Activated CD4-positive, alpha-beta T cell treated with anti-CD3 and anti-CD28 coated beads, Interleukin-2, amount 10 ng/mL, durations not matched to agents 24 days and 14 days (primary cell): ENCODE measurements at regions of chr17 and their contacts with region 1.

Region 1: GRCh38 chr17:48483471-48484131 is 47.2 kb downstream of the HOXB1 start:
- DNase-seq: peak; percentile 83
- H3K4me3 Mint-ChIP-seq: peak overlapping the region; percentile 51
- H3K27ac Mint-ChIP-seq: peak overlapping the region; percentile 63
- H3K4me1 Mint-ChIP-seq: peaks cover 34% of the 10 kb centered on the region
- H3K27me3 Mint-ChIP-seq: no peaks in the 10 kb centered on the region

Region 2: GRCh38 chr17:48024937-48025906 is 458.4 kb before region 1 on chr17:
- intact Hi-C with region 1: no loop called
- DNase-seq: peak; percentile 99
- H3K4me3 Mint-ChIP-seq: peak overlapping the region; percentile 88
- H3K27ac Mint-ChIP-seq: peak overlapping the region; percentile 83
- H3K4me1 Mint-ChIP-seq: peaks cover 28% of the 10 kb centered on the region
- H3K27me3 Mint-ChIP-seq: peaks cover 22% of the 10 kb centered on the region

Region 3: GRCh38 chr17:48351831-48352332 is 131.7 kb before region 1 on chr17:
- intact Hi-C with region 1: loop called (anchors 5 kb)
- DNase-seq: no peak
- H3K4me3 Mint-ChIP-seq: no peak overlapping the region
- H3K27ac Mint-ChIP-seq: no peak overlapping the region
- H3K4me1 Mint-ChIP-seq: peaks cover 6% of the 10 kb centered on the region
- H3K27me3 Mint-ChIP-seq: no peaks in the 10 kb centered on the region

Region 4: GRCh38 chr17:48429638-48430586 is 53.7 kb before region 1 on chr17 and contains the start of gene SKAP1:
- intact Hi-C with region 1: loop called (anchors 5 kb)
- DNase-seq: peak; percentile 93
- H3K4me3 Mint-ChIP-seq: peak within 1 kb of the TSS; percentile 99
- H3K27ac Mint-ChIP-seq: peak within 1 kb of the TSS; percentile 99
- H3K4me1 Mint-ChIP-seq: peaks cover 64% of the 10 kb centered on the region
- H3K27me3 Mint-ChIP-seq: no peaks in the 10 kb centered on the region
- total RNA-seq, gene SKAP1: 59.3 and 63.1 TPM in 2 replicates

Region 5: GRCh38 chr17:48441231-48441711 is 42.3 kb before region 1 on chr17:
- intact Hi-C with region 1: loop called (anchors 5 kb)
- DNase-seq: peak; percentile 86
- H3K4me3 Mint-ChIP-seq: peak overlapping the region; percentile 51
- H3K27ac Mint-ChIP-seq: peak overlapping the region; percentile 95
- H3K4me1 Mint-ChIP-seq: peaks cover 83% of the 10 kb centered on the region
- H3K27me3 Mint-ChIP-seq: no peaks in the 10 kb centered on the region

Region 6: GRCh38 chr17:48457080-48457836 is 26.3 kb before region 1 on chr17:
- intact Hi-C with region 1: loop called (anchors 2 kb)
- DNase-seq: peak; percentile 93
- H3K4me3 Mint-ChIP-seq: peak overlapping the region; percentile 53
- H3K27ac Mint-ChIP-seq: peak overlapping the region; percentile 17
- H3K4me1 Mint-ChIP-seq: peaks cover 53% of the 10 kb centered on the region
- H3K27me3 Mint-ChIP-seq: no peaks in the 10 kb centered on the region

Region 7: DNA sequence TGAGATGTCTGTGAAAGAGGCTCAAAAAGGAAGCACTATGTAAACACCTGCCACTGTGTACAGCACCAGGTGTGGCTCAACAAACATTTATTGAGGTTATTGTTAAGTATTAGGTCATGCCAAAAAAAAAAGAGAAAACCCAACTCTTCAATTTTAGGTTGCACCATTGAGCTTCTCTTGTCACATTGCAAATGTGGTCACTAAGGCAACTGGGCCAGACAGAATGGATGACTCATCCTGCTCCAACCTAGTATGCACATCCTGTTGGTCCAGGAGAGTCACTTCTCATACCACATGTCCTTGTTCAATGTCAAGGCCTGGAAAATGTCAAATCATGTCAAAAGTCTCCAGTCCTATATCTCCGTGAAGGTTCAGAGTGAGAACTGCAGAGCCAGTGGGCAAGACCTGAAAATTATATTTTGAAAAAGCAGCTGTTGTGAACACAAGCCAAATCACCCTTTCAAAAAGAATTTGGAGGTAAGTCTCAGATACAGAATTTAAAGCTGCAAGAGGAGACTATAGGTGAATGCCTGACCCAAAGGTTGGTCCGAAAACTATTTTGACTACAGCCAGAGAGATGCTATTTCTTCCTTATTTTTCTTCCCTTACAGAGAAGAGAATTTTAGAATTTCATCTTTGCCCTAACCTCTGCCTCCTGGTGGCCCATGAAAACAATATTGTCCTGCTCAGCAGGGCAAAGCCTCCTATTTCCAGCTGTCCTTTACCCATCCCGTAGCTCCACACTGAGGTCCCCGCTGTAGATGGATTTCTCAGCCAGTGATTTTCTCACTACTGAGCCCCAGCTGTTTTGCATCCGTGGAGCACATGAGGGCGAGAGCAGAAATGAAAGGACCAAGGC is 22.4 kb after region 1 on chr17:
- intact Hi-C with region 1: loop called (anchors 2 kb)
- DNase-seq: peak; percentile 91
- H3K4me3 Mint-ChIP-seq: peak overlapping the region; percentile 62
- H3K27ac Mint-ChIP-seq: peak overlapping the region; percentile 84
- H3K4me1 Mint-ChIP-seq: peaks cover 40% of the 10 kb centered on the region
- H3K27me3 Mint-ChIP-seq: peaks cover 11% of the 10 kb centered on the region

Region 8: GRCh38 chr17:48555258-48556228 is 71.9 kb after region 1 on chr17:
- intact Hi-C with region 1: no loop called
- DNase-seq: peak; percentile 61
- H3K4me3 Mint-ChIP-seq: peak overlapping the region; percentile 79
- H3K27ac Mint-ChIP-seq: peak overlapping the region; percentile 75
- H3K4me1 Mint-ChIP-seq: peaks cover 8% of the 10 kb centered on the region
- H3K27me3 Mint-ChIP-seq: peaks cover 36% of the 10 kb centered on the region